ENCODE measurements at regions of chr16 and their contacts with region 1.

Region 1: DNA sequence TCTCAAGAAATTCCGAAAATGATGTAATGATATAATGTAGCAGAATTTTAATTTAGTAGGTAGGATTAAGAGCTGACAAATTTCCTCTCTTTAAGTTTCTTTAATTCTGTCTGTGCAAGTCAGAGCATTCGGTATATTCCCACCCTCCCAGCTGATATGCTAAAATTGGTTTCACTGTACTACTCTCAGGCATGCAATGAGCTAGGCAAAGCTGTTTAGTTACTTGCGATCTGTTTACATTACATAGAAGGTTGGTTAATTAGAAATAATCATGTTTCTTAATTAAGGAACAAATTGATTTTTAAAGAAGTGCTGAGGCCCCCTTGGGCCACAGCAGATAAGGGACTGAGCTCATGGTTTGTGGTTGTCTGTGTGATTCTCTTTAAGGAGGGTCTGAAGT is 432.8 kb upstream of the HSBP1 start:
- DNase-seq: no peak
- ATAC-seq: no peak
- H3K4me3 ChIP-seq: no peak overlapping the region
- H3K4me1 ChIP-seq: no peaks in the 10 kb centered on the region
- CTCF ChIP-seq: no peak

Region 2: DNA sequence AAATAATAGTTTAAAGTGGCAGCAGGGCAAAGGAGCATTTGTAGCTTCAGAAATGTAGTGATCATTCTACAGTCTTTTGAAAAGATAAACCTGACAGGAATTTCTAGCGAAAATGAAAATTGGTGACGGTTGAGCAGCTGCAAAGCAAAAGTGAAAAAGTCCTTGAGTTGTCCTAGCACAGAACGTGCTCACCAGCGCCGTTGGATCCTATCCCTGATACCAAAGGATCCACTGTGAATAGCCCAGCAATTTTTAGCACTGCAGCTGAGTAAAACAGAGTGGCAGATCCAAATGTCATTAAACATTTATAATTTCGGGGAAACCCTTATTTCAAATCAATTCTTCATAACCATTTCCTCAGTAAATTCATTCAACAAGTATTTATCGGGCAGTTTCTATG is 21.0 kb before region 1 on chr16:
- intact Hi-C with region 1: loop called in 1 of 2 experiments (anchors 1 kb)
- DNase-seq: no peak
- ATAC-seq: no peak
- H3K4me3 ChIP-seq: no peak overlapping the region
- H3K4me1 ChIP-seq: no peaks in the 10 kb centered on the region
- CTCF ChIP-seq: no peak

Region 3: GRCh38 chr16:83458612-83459011 is 83.6 kb after region 1 on chr16:
- intact Hi-C with region 1: no loop called
- DNase-seq: no peak
- ATAC-seq: no peak
- H3K4me3 ChIP-seq: no peak overlapping the region
- H3K4me1 ChIP-seq: no peaks in the 10 kb centered on the region
- CTCF ChIP-seq: no peak

Region 4: DNA sequence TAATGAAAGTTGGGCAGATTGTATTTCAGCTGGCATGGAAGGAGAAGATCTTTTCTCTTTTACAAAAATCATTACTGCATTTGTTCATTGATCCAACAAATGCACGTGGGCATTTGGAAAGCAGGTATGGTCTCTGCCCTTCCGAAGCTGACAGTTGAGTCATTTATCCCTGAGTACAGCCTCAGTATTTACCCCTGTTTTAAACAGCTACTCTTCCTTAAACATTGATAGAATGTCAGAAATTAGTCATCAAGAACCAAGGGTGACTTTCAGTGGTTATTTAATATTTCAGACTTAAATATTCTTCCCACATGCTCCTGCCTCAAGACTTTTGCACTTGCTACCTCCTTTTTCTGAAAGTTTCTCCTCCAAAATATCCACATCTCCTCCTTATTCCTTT is 206.1 kb after region 1 on chr16:
- intact Hi-C with region 1: no loop called
- DNase-seq: no peak
- ATAC-seq: no peak
- H3K4me3 ChIP-seq: no peak overlapping the region
- H3K4me1 ChIP-seq: no peaks in the 10 kb centered on the region
- CTCF ChIP-seq: no peak